Ascending aorta (tissue), 2 donors: ENCODE measurements at regions of chr19 and their contacts with region 1.

Region 1: DNA sequence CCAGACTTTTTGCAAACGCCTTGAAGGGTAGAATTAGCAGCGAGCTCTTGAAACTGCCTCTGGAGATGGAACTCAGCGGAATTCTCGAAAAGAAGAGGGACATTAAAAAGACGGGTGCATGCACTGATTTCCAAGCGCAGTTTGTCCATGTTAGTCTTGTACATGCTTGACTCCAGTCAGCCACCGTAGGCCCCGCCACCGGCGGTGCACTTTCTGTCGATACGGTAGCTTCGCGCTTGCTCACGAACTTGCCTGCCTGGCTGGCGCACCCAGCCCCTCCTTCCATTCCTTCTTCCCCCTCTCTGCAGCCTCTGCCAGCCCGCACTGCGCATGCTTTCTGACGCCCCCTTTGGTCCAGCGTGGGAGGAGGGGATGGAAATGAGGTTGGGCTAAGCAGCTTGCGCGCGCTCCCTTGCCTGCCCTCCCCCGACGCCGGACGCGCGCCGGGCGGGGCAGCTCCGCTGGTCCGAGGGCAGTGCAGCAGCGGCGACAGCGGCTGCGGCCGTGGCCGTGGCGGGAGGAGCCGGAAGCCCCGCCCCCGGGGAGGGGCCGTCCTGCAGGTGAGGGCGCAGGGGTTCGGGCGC is at the start of gene ZNF575:
- DNase-seq: peak; percentile 61 to 94
- H3K4me3 ChIP-seq: peak within 1 kb of the TSS; percentile 73 to 75
- H3K27ac ChIP-seq: peak within 1 kb of the TSS; percentile 84 to 92
- H3K4me1 ChIP-seq: peaks cover 0 to 22% of the 10 kb centered on the region in 2 donors
- H3K27me3 ChIP-seq: no peaks in the 10 kb centered on the region
- CTCF ChIP-seq: peak in 1 of 3 experiments; percentile 4
- total RNA-seq, gene ZNF575: not detected

Region 2: DNA sequence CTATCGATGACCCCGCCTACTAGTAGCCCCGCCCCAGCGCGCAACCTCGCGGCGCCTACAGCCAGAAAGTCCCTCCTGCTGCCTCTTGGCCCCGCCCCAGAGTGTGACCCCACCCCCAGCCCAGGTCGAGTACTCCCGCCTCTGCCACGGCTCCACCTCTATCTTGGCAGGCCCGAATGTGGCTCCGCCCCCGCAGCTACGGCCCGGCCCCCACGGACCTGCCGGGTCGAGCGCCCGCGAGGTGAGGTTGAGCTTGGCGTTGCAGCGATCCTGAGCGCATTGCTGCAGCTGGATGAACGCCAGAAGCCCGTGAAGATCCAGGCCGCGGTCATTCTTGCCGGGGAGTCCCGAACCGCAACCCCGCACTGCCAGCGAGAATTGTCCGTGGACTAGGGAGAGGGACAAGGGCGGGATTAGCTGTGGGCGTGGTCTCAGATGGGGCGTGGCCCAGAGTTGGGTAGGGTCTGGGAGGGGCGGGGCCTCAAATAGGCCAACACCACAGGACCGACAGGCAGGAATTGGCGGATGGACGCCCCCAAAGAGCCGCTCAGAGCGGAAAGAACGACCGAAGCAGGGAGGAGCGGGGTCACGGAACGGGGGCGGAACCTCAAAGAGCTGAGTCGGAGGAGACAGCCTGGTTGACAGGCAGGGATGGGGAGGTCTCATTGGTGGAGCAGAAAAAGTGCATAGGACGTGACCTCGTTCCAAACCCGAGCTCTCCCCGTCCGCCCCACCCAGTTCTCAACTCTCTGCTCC is 69.5 kb before region 1 on chr19:
- intact Hi-C with region 1: loop called (anchors 1 kb)
- DNase-seq: peak; percentile 90 to 98
- H3K4me3 ChIP-seq: peak overlapping the region; percentile 58 to 69
- H3K27ac ChIP-seq: peak overlapping the region; percentile 73 to 88
- H3K4me1 ChIP-seq: peaks cover 0 to 8% of the 10 kb centered on the region in 2 donors
- H3K27me3 ChIP-seq: no peaks in the 10 kb centered on the region
- CTCF ChIP-seq: no peak

Region 3: DNA sequence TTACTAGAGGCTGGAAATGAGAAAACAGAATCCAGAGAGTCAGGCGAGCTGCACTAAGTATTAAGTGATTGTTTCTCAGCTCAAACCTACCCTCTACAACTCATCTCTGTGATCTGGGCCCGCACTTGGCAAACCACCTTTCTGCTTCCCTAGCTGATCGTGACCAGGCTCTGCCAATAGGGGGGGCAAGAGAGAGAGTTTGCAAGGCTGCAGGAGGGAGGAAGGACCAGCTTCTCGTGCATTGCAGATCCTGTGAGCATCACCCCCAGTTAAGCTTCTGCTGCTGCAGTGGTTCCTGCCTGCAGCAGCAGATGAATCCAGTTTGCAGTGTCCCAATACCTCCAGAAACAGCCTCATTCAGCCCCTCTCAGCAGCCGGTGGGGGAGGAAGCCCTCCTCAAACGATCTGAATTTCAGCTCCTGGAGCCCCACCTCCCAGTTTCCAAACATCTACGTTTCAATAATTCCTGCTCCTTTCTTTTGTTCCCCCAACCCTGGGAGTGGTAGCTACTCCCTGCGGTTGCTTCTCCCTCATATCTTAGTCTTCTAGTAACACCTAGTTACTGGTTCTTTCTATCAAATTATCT is 22.2 kb after region 1 on chr19:
- intact Hi-C with region 1: no loop called
- DNase-seq: peak in 1 of 2 donors; percentile 79
- H3K4me3 ChIP-seq: no peak overlapping the region
- H3K27ac ChIP-seq: no peak overlapping the region
- H3K4me1 ChIP-seq: no peaks in the 10 kb centered on the region
- H3K27me3 ChIP-seq: no peaks in the 10 kb centered on the region
- CTCF ChIP-seq: peak; percentile 35 to 58 (median 55)

Region 4: GRCh38 chr19:43575156-43575950 is 42.3 kb after region 1 on chr19 and contains the starts of genes PINLYP and XRCC1:
- intact Hi-C with region 1: loop called (anchors 1 kb)
- DNase-seq: peak; percentile 93 to 98
- H3K4me3 ChIP-seq: peak within 1 kb of the TSS; percentile 76 to 87
- H3K27ac ChIP-seq: peak within 1 kb of the TSS; percentile 67 to 86
- H3K4me1 ChIP-seq: peaks cover 9 to 10% of the 10 kb centered on the region in 2 donors
- H3K27me3 ChIP-seq: no peaks in the 10 kb centered on the region
- CTCF ChIP-seq: no peak
- total RNA-seq, gene PINLYP: 2.2 TPM
- total RNA-seq, gene XRCC1: 6.4 TPM

Region 5: DNA sequence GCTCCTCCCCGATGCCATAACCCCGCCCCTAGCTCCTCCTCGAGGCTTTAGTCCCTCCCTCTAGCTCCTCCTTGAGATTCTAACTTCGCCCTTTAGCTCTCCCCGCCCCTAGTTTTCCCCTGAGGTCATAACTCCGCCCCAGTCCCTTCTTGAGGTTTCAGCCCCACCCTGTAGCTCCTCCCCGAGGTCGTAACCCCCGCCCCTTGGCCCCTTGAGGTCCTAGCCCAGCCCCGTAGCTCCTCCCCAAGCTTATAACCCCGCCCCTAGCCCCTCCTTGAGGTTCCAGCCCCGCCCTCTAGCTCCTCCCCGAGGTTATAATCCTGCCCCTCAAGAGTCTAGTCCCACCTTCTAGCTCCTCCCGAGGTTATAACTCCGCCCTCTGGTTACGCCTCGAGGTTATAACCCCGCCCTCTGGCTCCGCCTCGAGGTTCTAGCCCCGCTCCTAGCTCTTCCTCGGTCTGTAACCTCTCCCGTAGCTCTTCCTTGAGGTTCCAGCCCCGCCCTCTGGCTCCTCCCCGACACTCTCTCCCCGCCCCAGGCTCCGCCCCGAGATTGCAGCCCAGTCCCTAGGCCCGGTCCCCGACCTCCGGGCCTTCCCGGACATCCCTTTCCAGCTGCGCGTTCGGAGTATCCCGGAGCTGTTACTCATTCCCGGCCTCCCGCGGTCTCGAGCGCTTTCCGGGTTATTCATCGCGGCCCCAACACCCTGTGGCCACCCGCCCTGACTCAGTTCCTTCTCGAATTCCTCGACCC is 135.5 kb after region 1 on chr19:
- intact Hi-C with region 1: loop called (anchors 1 kb)
- DNase-seq: peak; percentile 94 to 99
- H3K4me3 ChIP-seq: peak overlapping the region; percentile 75
- H3K27ac ChIP-seq: peak overlapping the region; percentile 90 to 93
- H3K4me1 ChIP-seq: peaks cover 3 to 13% of the 10 kb centered on the region in 2 donors
- H3K27me3 ChIP-seq: no peaks in the 10 kb centered on the region
- CTCF ChIP-seq: no peak

Region 6: GRCh38 chr19:44304659-44305193 is 771.7 kb after region 1 on chr19 and contains the start of gene ZNF235:
- intact Hi-C with region 1: loop called (anchors 5 kb)
- DNase-seq: peak; percentile 74 to 96
- H3K4me3 ChIP-seq: peak within 1 kb of the TSS; percentile 81 to 83
- H3K27ac ChIP-seq: peak within 1 kb of the TSS; percentile 76 to 83
- H3K4me1 ChIP-seq: no peaks in the 10 kb centered on the region
- H3K27me3 ChIP-seq: no peaks in the 10 kb centered on the region
- CTCF ChIP-seq: no peak
- total RNA-seq, gene ZNF235: 6.6 TPM